MCF 10A (cell line): ENCODE measurements at regions of chr4 and their contacts with region 1.

Region 1: DNA sequence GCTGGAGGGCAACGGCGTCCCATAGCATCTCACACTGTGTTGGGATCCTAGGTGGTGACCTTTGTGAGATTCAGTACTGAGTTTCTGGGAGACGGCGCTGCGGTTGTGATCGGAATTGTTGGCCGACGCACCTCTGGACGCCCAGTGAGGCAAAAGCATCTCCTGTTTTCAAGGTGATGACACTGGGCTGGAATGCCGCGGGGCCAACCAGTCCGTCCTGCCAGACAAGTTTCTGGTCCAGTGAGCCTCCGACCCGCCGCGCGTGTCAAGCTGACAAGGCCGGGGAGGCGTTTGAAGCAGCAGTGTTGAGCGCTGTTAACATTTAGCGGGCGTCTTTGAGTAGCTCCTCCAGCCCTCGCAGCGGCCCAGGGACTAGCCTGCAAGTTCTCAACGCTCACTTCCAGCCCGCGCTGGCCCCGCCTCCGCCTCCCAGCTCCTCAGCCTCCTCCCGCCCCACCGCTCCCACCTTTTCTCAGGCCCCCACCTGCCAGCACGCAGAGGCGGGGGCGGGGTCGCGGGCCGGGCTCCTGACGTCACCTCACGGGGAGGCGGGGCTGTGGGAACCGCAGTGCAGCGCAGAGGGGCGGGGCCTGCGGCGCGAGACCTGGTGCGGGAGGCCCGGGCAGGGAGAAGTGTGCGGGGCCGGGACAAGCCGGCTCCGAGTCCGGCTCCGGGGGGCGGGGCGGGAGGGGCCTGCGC is 476 bp upstream of the CDS1 start:
- DNase-seq: peak; percentile 92
- H3K4me3 Mint-ChIP-seq: peak overlapping the region; percentile 90
- H3K27ac Mint-ChIP-seq: peak overlapping the region; percentile 86
- H3K4me1 Mint-ChIP-seq: peaks cover 30% of the 10 kb centered on the region
- H3K27me3 Mint-ChIP-seq: no peaks in the 10 kb centered on the region
- CTCF ChIP-seq: no peak

Region 2: GRCh38 chr4:84563002-84563401 is 19.4 kb before region 1 on chr4:
- CTCF ChIA-PET with region 1: interaction called, 13 read pairs
- POLR2A ChIA-PET with region 1: interaction called, 3 read pairs
- intact Hi-C with region 1: no loop called
- DNase-seq: no peak
- H3K4me3 Mint-ChIP-seq: no peak overlapping the region
- H3K27ac Mint-ChIP-seq: no peak overlapping the region
- H3K4me1 Mint-ChIP-seq: no peaks in the 10 kb centered on the region
- H3K27me3 Mint-ChIP-seq: no peaks in the 10 kb centered on the region
- CTCF ChIP-seq: no peak

Region 3: DNA sequence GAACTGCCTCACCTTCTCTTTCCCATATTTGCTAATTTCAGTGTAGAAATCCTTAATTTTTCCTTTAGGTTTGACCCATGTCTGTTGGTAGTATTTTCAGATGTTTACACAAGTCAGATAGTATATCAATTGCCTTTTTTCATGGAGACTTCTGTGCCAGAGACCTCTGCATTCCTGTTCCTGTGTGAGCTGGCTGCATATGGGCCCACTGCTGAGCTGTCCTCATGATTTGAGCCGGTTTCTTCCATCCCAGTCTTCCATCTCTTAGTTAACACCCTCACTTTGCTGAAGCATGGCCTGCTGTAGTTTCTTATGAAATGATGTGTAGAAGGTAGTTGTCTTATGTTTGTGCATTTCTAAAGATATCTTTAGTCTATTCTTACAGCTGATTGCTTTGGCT is 40.5 kb after region 1 on chr4:
- CTCF ChIA-PET with region 1: no interaction called
- POLR2A ChIA-PET with region 1: interaction called, 10 read pairs
- intact Hi-C with region 1: no loop called
- DNase-seq: no peak
- H3K4me3 Mint-ChIP-seq: no peak overlapping the region
- H3K27ac Mint-ChIP-seq: no peak overlapping the region
- H3K4me1 Mint-ChIP-seq: no peaks in the 10 kb centered on the region
- H3K27me3 Mint-ChIP-seq: no peaks in the 10 kb centered on the region
- CTCF ChIP-seq: no peak

Region 4: DNA sequence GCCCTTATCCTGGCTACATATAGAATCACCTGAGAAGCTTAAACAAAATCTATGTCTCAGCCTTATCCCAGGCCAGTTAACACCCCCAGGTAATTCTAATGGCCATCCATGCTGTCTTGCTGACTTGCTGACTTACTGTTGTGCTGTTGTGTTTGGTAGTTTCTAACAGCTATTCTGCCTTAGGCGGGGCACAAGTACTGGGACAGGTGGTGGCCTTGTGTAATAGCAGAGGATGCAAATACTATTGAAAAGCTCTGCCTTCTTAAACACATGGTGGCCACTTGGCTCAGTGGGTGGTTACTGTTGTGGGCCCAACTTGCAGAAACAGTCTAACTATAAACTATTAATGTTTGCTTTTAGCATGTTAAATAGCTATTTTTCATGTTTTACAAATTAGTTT is 56.7 kb after region 1 on chr4:
- CTCF ChIA-PET with region 1: interaction called, 3 read pairs
- POLR2A ChIA-PET with region 1: interaction called, 35 read pairs
- intact Hi-C with region 1: no loop called
- DNase-seq: no peak
- H3K4me3 Mint-ChIP-seq: no peak overlapping the region
- H3K27ac Mint-ChIP-seq: no peak overlapping the region
- H3K4me1 Mint-ChIP-seq: peaks cover 11% of the 10 kb centered on the region
- H3K27me3 Mint-ChIP-seq: no peaks in the 10 kb centered on the region
- CTCF ChIP-seq: no peak

Region 5: GRCh38 chr4:84673475-84674240 is 91.2 kb after region 1 on chr4:
- CTCF ChIA-PET with region 1: interaction called, 7 read pairs
- POLR2A ChIA-PET with region 1: interaction called, 10 read pairs
- intact Hi-C with region 1: no loop called
- DNase-seq: peak; percentile 84
- H3K4me3 Mint-ChIP-seq: no peak overlapping the region
- H3K27ac Mint-ChIP-seq: peak overlapping the region; percentile 75
- H3K4me1 Mint-ChIP-seq: peaks cover 15% of the 10 kb centered on the region
- H3K27me3 Mint-ChIP-seq: no peaks in the 10 kb centered on the region
- CTCF ChIP-seq: no peak

Region 6: DNA sequence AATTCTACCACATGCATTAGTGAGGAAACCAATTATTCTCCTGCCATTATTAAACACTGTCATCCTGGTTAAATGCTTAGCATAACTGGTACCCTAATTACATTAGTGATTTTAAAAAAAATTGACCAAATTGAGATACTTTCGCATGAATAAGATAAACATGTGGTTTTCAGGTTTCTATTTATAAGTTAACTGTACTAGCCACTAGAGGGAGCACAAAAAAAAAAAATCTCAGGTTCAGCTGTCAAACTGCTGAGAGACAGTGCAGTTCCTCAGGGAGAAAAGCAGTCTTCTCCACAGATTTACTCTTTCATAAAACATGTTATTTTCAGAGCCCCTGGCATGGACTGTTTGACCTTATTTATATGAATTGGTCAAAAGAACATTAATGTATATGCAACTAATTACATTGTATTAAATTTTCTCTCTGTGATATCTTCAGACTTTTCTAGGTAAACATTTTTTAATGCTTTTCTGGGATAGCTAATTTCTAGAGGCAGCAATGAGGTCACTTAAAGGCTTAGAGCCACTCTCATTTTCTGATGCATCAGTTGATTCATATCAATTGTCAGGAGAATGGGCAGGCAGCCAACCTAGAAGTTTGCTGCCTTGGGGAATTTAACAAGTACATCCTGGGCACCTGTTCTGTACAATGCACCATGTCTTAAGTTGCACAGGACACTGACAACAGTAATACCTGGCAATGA is 168.0 kb after region 1 on chr4:
- CTCF ChIA-PET with region 1: interaction called, 13 read pairs
- POLR2A ChIA-PET with region 1: interaction called, 3 read pairs
- intact Hi-C with region 1: loop called (anchors 2 kb)
- DNase-seq: peak; percentile 51
- H3K4me3 Mint-ChIP-seq: no peak overlapping the region
- H3K27ac Mint-ChIP-seq: no peak overlapping the region
- H3K4me1 Mint-ChIP-seq: no peaks in the 10 kb centered on the region
- H3K27me3 Mint-ChIP-seq: no peaks in the 10 kb centered on the region
- CTCF ChIP-seq: peak; percentile 42